ENCODE measurements at regions of chr4 and their contacts with region 1.

Region 1: GRCh38 chr4:119041951-119042560 is 93.6 kb upstream of the MYOZ2 start:
- DNase-seq: peak; percentile 69
- H3K4me3 Mint-ChIP-seq: no peak overlapping the region
- H3K27ac Mint-ChIP-seq: no peak overlapping the region
- H3K4me1 Mint-ChIP-seq: no peaks in the 10 kb centered on the region
- H3K27me3 Mint-ChIP-seq: no peaks in the 10 kb centered on the region

Region 2: DNA sequence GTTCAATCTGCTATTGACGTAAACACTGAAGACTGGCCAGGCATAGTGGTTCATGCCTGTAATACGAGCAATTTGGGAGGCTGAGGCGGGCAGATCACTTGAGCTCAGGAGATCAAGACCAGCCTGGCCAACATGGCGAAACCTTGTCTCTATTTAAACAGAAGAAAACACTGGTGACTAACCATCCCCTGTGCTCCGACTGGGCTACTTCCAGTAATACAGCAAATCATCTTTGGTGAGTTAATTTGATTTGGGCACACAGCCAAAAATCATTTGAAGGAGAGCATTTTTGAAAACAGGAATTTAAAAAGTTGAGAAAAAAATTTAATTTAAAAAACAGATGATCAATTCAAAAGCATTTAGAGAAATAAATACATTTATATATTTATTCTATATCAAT is 258.2 kb before region 1 on chr4:
- CTCF ChIA-PET with region 1: no interaction called
- DNase-seq: no peak
- H3K4me3 Mint-ChIP-seq: no peak overlapping the region
- H3K27ac Mint-ChIP-seq: no peak overlapping the region
- H3K4me1 Mint-ChIP-seq: no peaks in the 10 kb centered on the region
- H3K27me3 Mint-ChIP-seq: no peaks in the 10 kb centered on the region

Region 3: GRCh38 chr4:118798658-118799057 is 243.4 kb before region 1 on chr4:
- CTCF ChIA-PET with region 1: no interaction called
- DNase-seq: no peak
- H3K4me3 Mint-ChIP-seq: no peak overlapping the region
- H3K27ac Mint-ChIP-seq: no peak overlapping the region
- H3K4me1 Mint-ChIP-seq: no peaks in the 10 kb centered on the region
- H3K27me3 Mint-ChIP-seq: no peaks in the 10 kb centered on the region

Region 4: DNA sequence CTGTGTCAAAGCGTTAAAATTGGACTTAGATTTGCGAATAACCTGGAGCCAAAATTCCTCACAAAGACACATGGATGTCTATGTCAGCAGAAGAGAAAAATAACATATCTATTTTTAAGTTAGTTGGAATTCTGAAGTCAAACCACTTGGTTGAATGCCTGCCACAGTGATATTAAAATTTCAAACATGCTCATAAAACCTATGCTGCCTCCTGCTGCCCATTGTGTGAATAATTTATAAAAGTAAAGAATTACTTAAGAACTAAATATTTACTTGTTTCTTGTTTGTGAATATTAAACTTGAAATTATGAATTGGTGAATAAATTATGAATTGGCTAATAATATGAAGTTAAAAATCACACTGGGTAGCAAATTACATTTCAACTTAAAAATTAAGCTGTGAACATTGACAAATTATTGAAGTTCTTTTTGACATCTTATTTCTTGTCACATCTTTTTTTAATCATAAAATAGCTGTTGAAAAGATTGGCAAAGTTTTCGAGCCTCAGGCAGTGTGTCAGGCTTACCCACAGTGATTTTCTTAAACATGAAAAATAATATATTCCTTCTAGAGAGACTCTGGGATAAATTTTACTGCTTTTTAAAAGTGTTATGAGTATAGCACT is 244.4 kb after region 1 on chr4:
- CTCF ChIA-PET with region 1: interaction called, 17 read pairs
- DNase-seq: peak; percentile 47
- H3K4me3 Mint-ChIP-seq: no peak overlapping the region
- H3K27ac Mint-ChIP-seq: no peak overlapping the region
- H3K4me1 Mint-ChIP-seq: peaks cover 12% of the 10 kb centered on the region
- H3K27me3 Mint-ChIP-seq: no peaks in the 10 kb centered on the region

Measured in activated naive CD4-positive, alpha-beta T cell treated with anti-CD3 and anti-CD28 coated beads, Interleukin-2, amount 10 ng/mL, durations not matched to agents 7 days and 5 days (primary cell).